Right ventricle myocardium superior (tissue), 1 donor: ENCODE measurements at regions of chr17 and their contacts with region 1.

Region 1: GRCh38 chr17:70332356-70333210 is 163.3 kb downstream of the KCNJ2 start:
- DNase-seq: no peak
- ATAC-seq: no peak

Region 2: DNA sequence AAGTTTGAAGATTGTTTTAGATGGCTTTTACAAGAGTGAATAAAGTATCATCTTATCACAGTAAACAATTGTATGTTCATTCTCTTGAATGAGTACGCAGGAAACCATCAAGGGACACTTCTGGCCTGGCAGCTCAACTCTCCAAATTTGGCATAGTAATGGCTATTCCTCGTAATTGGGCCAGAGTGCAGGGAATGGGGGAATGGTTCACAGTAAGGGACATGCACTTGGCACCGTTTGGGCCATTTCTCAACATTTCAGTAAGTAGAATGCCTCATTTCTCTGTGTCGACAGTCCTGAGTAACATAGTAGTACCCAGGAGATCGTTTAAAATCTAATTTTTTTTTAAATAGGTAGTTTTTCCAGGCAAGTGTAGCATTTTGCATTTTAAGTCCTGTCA is 146.3 kb after region 1 on chr17:
- intact Hi-C with region 1: loop called (anchors 10 kb)
- DNase-seq: peak; percentile 47
- ATAC-seq: peak; percentile 86